Vagina (tissue), 2 donors: ENCODE measurements at regions of chr10 and their contacts with region 1.

Region 1: DNA sequence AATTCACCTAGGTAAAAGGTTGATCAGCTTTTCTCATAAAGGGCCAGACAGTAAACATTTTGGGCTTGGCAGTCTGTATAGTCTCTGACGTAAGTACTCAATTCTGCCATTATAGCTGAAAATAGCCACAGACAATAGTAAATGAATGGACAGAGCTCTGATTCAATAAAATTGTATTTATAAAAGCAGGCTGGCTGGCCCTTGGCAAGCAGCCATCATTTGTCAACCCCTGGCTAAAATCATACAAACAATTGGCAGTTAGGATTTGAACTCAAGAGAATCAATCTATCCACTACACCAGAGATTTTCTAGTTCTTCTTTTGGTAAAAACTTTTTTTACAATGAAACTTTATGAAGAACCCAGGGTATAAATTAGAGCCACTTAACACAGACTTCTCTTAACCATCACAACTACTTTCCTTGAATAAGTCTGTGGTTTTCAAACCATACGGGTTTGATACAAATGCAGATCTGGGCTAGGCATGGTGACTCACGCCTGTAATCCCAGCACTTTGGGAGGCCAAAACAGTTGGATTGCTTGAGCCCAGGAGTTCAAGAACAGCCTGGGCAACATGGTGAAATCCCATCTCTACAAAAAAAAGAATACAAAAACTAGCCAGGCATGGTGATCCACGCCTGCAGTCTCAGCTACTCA is 124.5 kb downstream of the SLC16A9 start:
- DNase-seq: no peak
- H3K4me3 ChIP-seq: no peak overlapping the region
- H3K27ac ChIP-seq: peak overlapping the region; percentile 64
- H3K4me1 ChIP-seq: peaks cover 51% of the 10 kb centered on the region
- H3K27me3 ChIP-seq: no peaks in the 10 kb centered on the region
- CTCF ChIP-seq: no peak
- POLR2A ChIP-seq: no peak

Region 2: DNA sequence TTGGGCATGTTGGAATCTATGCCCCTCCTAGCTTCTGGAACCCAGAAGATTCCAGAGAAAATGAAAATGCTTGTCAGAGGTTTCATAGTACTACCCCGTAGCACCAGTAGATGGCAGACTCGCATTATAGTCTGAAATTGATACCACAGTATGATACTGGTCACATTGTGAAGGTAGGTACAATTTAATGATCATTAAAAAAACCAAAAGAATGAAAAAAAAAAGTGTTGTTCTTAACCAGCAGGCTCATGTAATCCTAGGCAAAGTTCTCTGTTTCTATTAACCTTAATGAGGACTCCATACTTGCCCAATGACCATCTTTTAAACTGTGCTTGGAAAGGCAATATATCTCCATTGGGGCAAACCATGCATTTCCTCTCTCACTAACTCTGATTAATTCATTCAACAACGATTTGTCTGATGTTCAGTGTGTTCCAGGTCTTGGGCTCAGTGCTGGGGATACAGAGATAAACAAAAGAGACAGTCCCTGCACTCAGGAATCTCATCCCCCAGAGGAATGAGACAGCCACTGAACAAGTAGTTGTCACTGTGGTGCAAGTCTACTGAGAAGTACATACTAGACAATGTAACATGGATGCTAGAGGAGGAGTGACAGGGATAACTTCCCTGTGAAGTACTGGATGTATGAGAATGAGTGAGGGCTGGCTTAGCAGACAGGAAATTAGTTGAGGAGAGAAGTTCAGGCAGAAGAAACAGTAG is 632.3 kb before region 1 on chr10:
- intact Hi-C with region 1: no loop called
- DNase-seq: no peak
- H3K4me3 ChIP-seq: no peak overlapping the region
- H3K27ac ChIP-seq: peak overlapping the region; percentile 63
- H3K4me1 ChIP-seq: no peaks in the 10 kb centered on the region
- H3K27me3 ChIP-seq: no peaks in the 10 kb centered on the region
- CTCF ChIP-seq: peak; percentile 50 to 81 (median 58)
- POLR2A ChIP-seq: no peak

Region 3: GRCh38 chr10:59240582-59241183 is 344.5 kb before region 1 on chr10:
- intact Hi-C with region 1: loop called (anchors 5 kb)
- DNase-seq: no peak
- H3K4me3 ChIP-seq: no peak overlapping the region
- H3K27ac ChIP-seq: no peak overlapping the region
- H3K4me1 ChIP-seq: no peaks in the 10 kb centered on the region
- H3K27me3 ChIP-seq: no peaks in the 10 kb centered on the region
- CTCF ChIP-seq: peak; percentile 50 to 80 (median 57)
- POLR2A ChIP-seq: no peak